ENCODE measurements at regions of chr1 and their contacts with region 1.

Region 1: GRCh38 chr1:85259118-85259911 is at the start of gene C1orf52:
- DNase-seq: peak; percentile 88 to 100
- H3K4me3 ChIP-seq: peak within 1 kb of the TSS; percentile 79 to 94 (median 85)
- H3K27ac ChIP-seq: peak within 1 kb of the TSS; percentile 69; the same call in 1 of the 2 replicates
- H3K4me1 ChIP-seq: peaks cover 0 to 4% (median 2%) of the 10 kb centered on the region in 4 experiments; a peak in 3 of 7 replicates
- H3K27me3 ChIP-seq: no peaks in the 10 kb centered on the region
- CTCF ChIP-seq: peak; percentile 88 to 94 (median 89)
- EP300 ChIP-seq: peak in 1 of 2 experiments; percentile 62; a peak in 1 of 3 replicates
- POLR2A ChIP-seq: peak; percentile 50 to 91
- RAD21 ChIP-seq: peak; percentile 56 to 71
- total RNA-seq, gene C1orf52: 39.1 and 39.3 TPM in 2 replicates

Region 2: GRCh38 chr1:85109475-85109874 is 149.8 kb before region 1 on chr1:
- CTCF ChIA-PET with region 1: interaction called, 141 read pairs
- POLR2A ChIA-PET with region 1: interaction called, 7 read pairs
- DNase-seq: peak in 1 of 2 experiments; percentile 50
- H3K4me3 ChIP-seq: no peak overlapping the region
- H3K27ac ChIP-seq: no peak overlapping the region
- H3K4me1 ChIP-seq: no peaks in the 10 kb centered on the region
- H3K27me3 ChIP-seq: no peaks in the 10 kb centered on the region
- CTCF ChIP-seq: peak; percentile 82 to 94 (median 93)
- EP300 ChIP-seq: no peak
- POLR2A ChIP-seq: no peak
- RAD21 ChIP-seq: peak; percentile 97 to 98

Region 3: GRCh38 chr1:85189120-85189519 is 70.2 kb before region 1 on chr1:
- CTCF ChIA-PET with region 1: interaction called, 10 read pairs
- POLR2A ChIA-PET with region 1: no interaction called
- DNase-seq: no peak
- H3K4me3 ChIP-seq: no peak overlapping the region
- H3K27ac ChIP-seq: no peak overlapping the region
- H3K4me1 ChIP-seq: no peaks in the 10 kb centered on the region; a peak in 2 of 7 replicates
- H3K27me3 ChIP-seq: no peaks in the 10 kb centered on the region
- CTCF ChIP-seq: no peak
- EP300 ChIP-seq: no peak
- POLR2A ChIP-seq: no peak
- RAD21 ChIP-seq: no peak

Region 4: GRCh38 chr1:85230305-85230980 is 28.9 kb before region 1 on chr1:
- CTCF ChIA-PET with region 1: interaction called, 15 read pairs
- POLR2A ChIA-PET with region 1: no interaction called
- DNase-seq: no peak
- H3K4me3 ChIP-seq: no peak overlapping the region
- H3K27ac ChIP-seq: no peak overlapping the region
- H3K4me1 ChIP-seq: peaks cover 0 to 5% (median 2%) of the 10 kb centered on the region in 4 experiments; a peak in 4 of 7 replicates
- H3K27me3 ChIP-seq: no peaks in the 10 kb centered on the region
- CTCF ChIP-seq: peak; percentile 45 to 61 (median 60)
- EP300 ChIP-seq: no peak
- POLR2A ChIP-seq: no peak
- RAD21 ChIP-seq: peak; percentile 52 to 69

Region 5: GRCh38 chr1:85276215-85276977 is 17.1 kb after region 1 on chr1 and contains the start of gene BCL10:
- CTCF ChIA-PET with region 1: interaction called, 65 read pairs
- POLR2A ChIA-PET with region 1: interaction called, 11 read pairs
- DNase-seq: peak; percentile 96 to 98
- H3K4me3 ChIP-seq: peak within 1 kb of the TSS; percentile 81 to 99 (median 91)
- H3K27ac ChIP-seq: peak within 1 kb of the TSS; percentile 84
- H3K4me1 ChIP-seq: peaks cover 0 to 6% (median 0%) of the 10 kb centered on the region in 4 experiments; a peak in 1 of 7 replicates
- H3K27me3 ChIP-seq: no peaks in the 10 kb centered on the region
- CTCF ChIP-seq: no peak
- EP300 ChIP-seq: 0 out of 3 replicates have a peak, but pooled peaks of 1 of the 2 experiments have one; percentile 33
- POLR2A ChIP-seq: peak; percentile 67 to 82
- RAD21 ChIP-seq: no peak; a peak in 1 of 4 replicates
- total RNA-seq, gene BCL10: 24.6 and 29.6 TPM in 2 replicates

Region 6: DNA sequence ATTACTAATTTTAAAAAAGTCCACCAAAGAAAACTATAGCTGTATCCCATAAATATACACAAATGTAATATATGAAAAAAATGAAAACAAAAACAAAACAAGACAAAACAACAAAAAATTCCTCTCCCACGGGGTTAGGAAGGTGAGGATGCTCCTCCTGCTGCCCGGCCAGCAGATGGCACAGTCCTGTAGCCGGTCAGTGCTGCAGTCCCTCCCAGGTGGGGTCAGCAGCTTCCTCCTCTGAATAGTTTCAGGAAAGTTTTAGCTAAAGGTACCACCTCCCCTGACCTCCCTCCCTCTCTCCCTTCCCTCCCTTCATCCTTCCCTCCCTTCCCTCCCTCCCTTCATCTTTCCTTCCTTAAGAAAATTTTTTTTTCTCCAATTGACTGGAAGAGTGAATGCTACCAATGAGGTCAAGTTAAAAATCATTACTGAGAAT is 85.0 kb after region 1 on chr1:
- CTCF ChIA-PET with region 1: no interaction called
- POLR2A ChIA-PET with region 1: no interaction called
- DNase-seq: peak in 1 of 2 experiments; percentile 86
- H3K4me3 ChIP-seq: no peak overlapping the region
- H3K27ac ChIP-seq: no peak overlapping the region
- H3K4me1 ChIP-seq: peaks cover 0 to 7% (median 2%) of the 10 kb centered on the region in 4 experiments; a peak in 3 of 7 replicates
- H3K27me3 ChIP-seq: no peaks in the 10 kb centered on the region
- CTCF ChIP-seq: peak; percentile 81 to 95 (median 88)
- EP300 ChIP-seq: peak in 1 of 2 experiments; percentile 16; a peak in 1 of 3 replicates
- POLR2A ChIP-seq: no peak
- RAD21 ChIP-seq: peak; percentile 85 to 86

Region 7: GRCh38 chr1:85464497-85465098 is 205.3 kb after region 1 on chr1:
- CTCF ChIA-PET with region 1: no interaction called
- POLR2A ChIA-PET with region 1: no interaction called
- DNase-seq: peak; percentile 34 to 83
- H3K4me3 ChIP-seq: peak overlapping the region; percentile 62 to 87 (median 62)
- H3K27ac ChIP-seq: no peak overlapping the region
- H3K4me1 ChIP-seq: peaks cover 0 to 10% (median 3%) of the 10 kb centered on the region in 4 experiments; a peak in 6 of 7 replicates
- H3K27me3 ChIP-seq: peaks cover 0 to 23% (median 16%) of the 10 kb centered on the region in 4 experiments; a peak in 6 of 7 replicates
- CTCF ChIP-seq: no peak
- EP300 ChIP-seq: no peak
- POLR2A ChIP-seq: no peak; a peak in 1 of 3 replicates
- RAD21 ChIP-seq: no peak